Right ventricle myocardium inferior (tissue), 1 donor: ENCODE measurements at regions of chr11 and their contacts with region 1.

Region 1: DNA sequence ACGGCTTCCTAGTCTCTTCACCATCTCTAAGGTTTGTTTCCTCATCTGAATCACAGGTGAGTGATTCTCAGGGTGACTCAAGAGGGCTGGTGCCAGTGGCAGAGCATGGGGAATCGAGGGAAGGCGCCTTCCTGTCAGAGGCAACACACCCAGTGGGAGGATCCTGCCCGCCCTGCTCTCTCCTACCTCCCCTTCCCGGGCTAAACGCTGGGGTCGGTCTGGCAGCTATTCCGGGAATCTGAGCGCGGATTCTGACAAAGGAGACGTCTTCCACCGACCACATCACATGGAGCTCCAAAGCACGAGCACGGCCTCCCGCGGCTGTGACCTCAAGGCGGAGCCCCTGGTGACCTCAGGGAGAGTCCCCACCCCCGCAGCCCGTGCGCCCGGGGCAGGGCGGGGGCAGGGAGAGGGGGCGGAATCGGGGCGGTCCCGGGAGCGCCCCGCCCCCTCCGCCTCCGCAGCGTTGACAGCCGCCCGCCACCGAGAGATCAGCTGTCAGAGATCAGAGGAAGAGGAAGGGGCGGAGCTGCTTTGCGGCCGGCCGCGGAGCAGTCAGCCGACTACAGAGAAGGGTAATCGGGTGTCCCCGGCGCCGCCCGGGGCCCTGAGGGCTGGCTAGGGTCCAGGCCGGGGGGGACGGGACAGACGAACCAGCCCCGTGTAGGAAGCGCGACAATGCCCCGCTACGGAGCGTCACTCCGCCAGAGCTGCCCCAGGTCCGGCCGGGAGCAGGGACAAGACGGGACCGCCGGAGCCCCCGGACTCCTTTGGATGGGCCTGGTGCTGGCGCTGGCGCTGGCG is at the start of gene SMPD1:
- DNase-seq: peak; percentile 98
- ATAC-seq: peak; percentile 99
- total RNA-seq, gene SMPD1: 60.6 TPM

Region 2: GRCh38 chr11:5831196-5831829 is 558.8 kb before region 1 on chr11:
- intact Hi-C with region 1: no loop called
- DNase-seq: no peak
- ATAC-seq: no peak

Region 3: DNA sequence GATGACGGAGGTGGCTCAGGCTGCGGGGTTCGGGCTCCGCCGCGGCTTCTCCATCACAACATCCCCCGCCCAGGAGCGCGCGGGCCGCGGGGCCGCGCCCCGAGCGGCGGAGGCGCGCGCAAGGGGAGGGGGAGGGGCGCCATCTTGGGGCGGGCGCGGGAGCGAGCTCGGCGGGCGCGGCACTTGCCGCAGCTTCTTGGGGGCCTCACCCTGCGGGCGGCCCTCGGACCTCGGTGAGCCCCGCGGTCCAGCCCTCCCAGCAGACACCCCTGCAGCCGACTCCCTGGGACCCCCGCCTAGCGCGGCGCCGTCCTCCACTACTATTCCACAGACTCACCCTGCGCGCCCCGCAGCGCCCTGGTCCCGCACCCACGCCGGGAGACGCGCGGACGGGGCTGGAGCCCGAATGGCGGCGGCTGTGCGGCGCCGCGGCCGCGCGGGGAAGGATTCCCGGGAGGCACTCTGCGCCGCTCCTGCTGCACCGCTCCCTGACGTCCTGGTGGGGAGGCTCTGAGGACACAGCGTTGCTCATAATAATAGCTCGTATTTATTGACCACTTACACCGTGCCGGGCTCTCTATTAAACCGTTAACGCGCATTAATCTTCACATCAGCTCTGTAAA is 29.0 kb after region 1 on chr11 and contains the start of gene APBB1:
- intact Hi-C with region 1: loop called (anchors 1 kb)
- DNase-seq: peak; percentile 77
- ATAC-seq: peak; percentile 94
- total RNA-seq, gene APBB1: 85.5 TPM

Region 4: GRCh38 chr11:6473481-6474422 is 83.6 kb after region 1 on chr11 and contains the start of gene TRIM3:
- intact Hi-C with region 1: loop called (anchors 1 kb)
- DNase-seq: peak; percentile 97
- ATAC-seq: peak; percentile 93
- total RNA-seq, gene TRIM3: 12.5 TPM

Region 5: GRCh38 chr11:6603287-6604080 is 213.4 kb after region 1 on chr11 and contains the starts of genes ILK and RRP8:
- intact Hi-C with region 1: loop called (anchors 10 kb)
- DNase-seq: peak; percentile 96
- ATAC-seq: peak; percentile 90
- total RNA-seq, gene ILK: 233 TPM
- total RNA-seq, gene RRP8: 22.9 TPM